PC-3 (cell line): ENCODE measurements at regions of chr22 and their contacts with region 1.

Region 1: DNA sequence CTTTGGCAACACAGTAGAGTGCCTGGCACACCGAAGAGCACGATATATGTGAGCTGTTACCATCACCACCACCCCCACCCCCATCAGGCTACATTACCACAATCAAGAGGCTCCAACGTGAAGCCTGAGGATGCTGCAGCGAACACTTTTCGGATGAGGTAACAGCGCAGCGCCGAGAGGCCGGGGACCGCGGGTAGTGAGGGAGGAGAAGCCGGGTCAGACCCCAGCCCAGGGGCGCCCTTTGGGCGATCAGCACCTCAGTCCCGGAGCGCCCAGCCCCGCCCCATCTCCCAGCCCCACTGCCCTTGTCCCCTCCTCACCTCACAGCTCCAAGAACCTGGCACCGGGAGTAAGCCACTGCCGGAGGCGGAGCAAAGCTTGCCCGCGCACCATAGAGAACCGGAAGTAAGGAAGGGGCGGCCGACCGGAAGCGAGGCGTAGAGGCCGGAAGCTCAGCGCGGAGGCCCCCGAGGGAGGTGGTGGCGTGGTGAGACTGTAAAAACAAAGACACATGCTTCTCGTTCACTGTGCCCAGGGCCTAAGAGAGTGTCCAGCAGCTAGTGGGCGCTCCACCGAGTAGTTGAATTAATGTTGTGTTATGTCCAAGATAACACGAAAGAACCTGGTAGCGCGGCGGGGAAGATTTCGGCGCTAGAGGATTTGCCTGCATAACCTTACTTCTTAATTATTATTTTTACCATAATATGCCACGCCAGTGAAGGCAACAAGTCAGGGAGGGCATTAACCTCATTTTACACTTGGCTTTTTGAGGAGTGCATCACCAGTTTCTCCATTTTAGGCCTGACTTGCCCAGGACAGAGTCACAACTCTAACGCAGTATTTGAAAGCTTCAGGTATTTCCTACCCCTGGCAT is at the start of gene THOC5:
- DNase-seq: peak; percentile 90
- ATAC-seq: peak; percentile 96
- H3K4me3 ChIP-seq: peak within 1 kb of the TSS; percentile 73
- H3K27ac ChIP-seq: peak within 1 kb of the TSS; percentile 78
- H3K4me1 ChIP-seq: peaks cover 10% of the 10 kb centered on the region
- H3K27me3 ChIP-seq: no peaks in the 10 kb centered on the region
- CTCF ChIP-seq: peak; percentile 79
- total RNA-seq, gene THOC5: 32.8 and 33.9 TPM in 2 replicates

Region 2: GRCh38 chr22:29431986-29432385 is 121.6 kb before region 1 on chr22:
- CTCF ChIA-PET with region 1: no interaction called
- POLR2A ChIA-PET with region 1: interaction called, 12 read pairs
- intact Hi-C with region 1: no loop called
- DNase-seq: no peak
- ATAC-seq: no peak
- H3K4me3 ChIP-seq: no peak overlapping the region
- H3K27ac ChIP-seq: no peak overlapping the region
- H3K4me1 ChIP-seq: no peaks in the 10 kb centered on the region
- H3K27me3 ChIP-seq: peaks cover 22% of the 10 kb centered on the region
- CTCF ChIP-seq: no peak